Breast epithelium (tissue), 4 donors: ENCODE measurements at regions of chr17 and their contacts with region 1.

Region 1: DNA sequence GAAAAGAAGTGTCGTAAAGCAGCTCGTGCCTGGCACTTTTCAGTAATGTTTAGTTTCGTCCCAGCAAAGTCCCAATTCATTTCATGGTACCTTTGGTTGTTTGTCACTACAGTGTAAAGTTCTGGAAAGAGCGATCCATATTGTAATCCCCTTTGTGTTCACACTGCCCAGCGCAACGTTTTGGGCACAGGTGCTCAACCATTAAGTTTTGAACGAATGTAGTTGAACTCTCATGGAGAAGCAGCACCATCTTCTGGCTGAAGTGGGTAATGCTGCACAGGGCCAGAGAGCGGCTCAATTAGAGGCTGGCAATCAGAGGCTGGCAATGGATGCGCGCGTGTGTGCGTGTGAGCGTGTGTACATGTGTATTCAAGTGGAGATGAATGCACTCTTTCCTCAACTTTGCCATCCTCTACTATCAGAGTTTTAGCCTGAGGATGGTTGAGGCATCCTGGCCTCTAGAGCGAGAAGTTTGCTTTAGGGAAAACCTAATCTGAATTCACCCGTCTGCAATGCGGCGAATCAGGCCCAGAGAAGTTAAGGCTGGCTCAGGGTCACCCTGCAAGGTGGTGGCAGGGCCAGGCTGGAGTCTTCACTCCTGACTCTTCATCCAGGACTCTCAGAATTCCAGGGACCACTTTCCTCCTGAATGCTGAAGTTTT is 29.9 kb downstream of the DYNLL2 start:
- DNase-seq: peak; percentile 67 to 70
- H3K4me3 ChIP-seq: no peak overlapping the region
- H3K27ac ChIP-seq: no peak overlapping the region
- H3K4me1 ChIP-seq: no peaks in the 10 kb centered on the region
- H3K27me3 ChIP-seq: no peaks in the 10 kb centered on the region
- CTCF ChIP-seq: peak; percentile 58 to 95 (median 93)
- POLR2A ChIP-seq: no peak

Region 2: GRCh38 chr17:57125406-57125805 is 987.7 kb before region 1 on chr17:
- intact Hi-C with region 1: loop called (anchors 5 kb)
- DNase-seq: no peak
- H3K4me3 ChIP-seq: no peak overlapping the region
- H3K27ac ChIP-seq: no peak overlapping the region
- H3K4me1 ChIP-seq: no peaks in the 10 kb centered on the region
- H3K27me3 ChIP-seq: no peaks in the 10 kb centered on the region
- CTCF ChIP-seq: no peak
- POLR2A ChIP-seq: no peak

Region 3: DNA sequence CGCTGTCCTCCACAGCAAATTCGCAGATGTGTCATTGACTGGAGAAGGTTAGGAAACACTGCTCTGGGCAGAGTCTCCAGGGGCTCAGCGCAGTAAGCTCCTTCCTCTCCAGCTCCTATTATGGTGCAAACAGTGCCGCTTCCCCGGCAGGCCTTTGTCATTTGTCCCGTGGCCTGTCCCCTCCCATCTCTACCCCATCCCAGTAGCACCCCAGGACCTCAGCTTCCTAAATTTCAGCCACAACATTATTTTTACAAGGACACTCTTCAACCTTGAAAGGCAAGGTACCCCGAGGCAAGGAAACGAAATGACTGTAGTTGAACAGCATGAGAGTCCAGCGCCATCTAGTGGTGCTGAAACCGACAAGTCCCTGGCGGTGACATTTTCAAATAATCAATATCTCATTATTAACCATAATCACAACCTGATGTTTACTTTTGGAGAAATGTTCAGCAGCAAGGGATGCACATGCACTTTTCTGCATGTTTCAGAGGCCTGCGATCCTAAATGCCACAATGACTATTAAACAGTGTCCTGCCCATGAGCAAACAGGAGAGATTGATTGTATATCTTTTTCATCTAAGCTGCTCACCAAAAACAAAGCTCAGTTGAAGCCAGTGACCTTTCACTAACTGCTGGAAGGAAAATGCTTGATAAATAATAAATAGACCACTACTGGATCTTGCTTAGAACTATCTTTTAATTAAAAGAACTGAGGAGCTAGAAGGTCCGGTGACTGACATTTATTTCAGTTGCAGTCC is 279.7 kb before region 1 on chr17:
- intact Hi-C with region 1: loop called (anchors 10 kb)
- DNase-seq: peak; percentile 49 to 70
- H3K4me3 ChIP-seq: peak overlapping the region; percentile 35 to 61 (median 38)
- H3K27ac ChIP-seq: peak overlapping the region; percentile 31 to 68
- H3K4me1 ChIP-seq: peaks cover 0 to 3% of the 10 kb centered on the region in 2 donors
- H3K27me3 ChIP-seq: no peaks in the 10 kb centered on the region
- CTCF ChIP-seq: peak; percentile 69 to 87 (median 83)
- POLR2A ChIP-seq: no peak

Region 4: DNA sequence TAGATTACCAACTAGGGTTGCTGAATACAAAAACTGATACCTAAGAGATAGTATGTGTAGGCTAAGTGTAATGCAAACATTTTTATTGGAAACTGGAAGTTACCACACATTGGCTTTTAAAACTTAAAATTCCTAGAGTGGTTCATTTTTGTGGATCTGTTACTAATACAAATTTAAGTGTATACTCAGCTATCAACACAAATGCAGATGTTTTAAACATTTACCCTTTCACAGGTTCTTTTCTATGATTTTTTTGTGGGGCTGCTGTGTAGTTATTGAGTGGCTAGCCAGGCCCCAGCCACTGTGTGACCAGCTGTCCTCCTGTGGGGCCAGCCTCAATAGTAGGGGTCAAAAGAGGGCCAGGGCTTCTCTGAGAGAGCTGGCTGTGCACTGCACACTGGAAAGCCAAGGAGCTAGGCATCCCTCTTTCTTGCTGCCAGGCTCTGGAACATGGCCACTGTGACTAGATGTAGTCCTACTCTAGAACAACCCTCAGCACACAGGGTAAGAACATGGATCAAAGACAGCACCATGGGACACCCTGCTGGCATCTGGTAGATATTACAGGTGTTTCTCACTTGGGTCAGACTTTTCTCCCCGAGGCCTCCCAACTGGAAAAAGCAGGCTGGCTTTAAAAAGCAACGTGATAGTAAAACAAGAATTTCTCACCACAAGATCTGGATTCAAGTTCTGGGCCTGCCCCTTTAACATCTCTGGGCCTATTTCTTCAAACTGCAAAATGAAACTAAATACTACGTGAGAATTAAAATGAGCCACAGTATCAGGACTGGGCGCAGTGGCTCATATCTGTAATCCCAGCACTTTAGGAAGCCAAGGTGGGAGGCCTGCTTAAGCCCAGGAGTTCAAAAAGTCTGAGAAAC is 117.8 kb before region 1 on chr17:
- intact Hi-C with region 1: loop called (anchors 10 kb)
- DNase-seq: peak; percentile 59 to 74
- H3K4me3 ChIP-seq: no peak overlapping the region
- H3K27ac ChIP-seq: peak overlapping the region; percentile 27 to 37
- H3K4me1 ChIP-seq: peaks cover 0 to 5% of the 10 kb centered on the region in 2 donors
- H3K27me3 ChIP-seq: no peaks in the 10 kb centered on the region
- CTCF ChIP-seq: peak; percentile 56 to 82 (median 82)
- POLR2A ChIP-seq: no peak